OCI-LY7 (cell line): ENCODE measurements at regions of chr15 and their contacts with region 1.

Region 1: DNA sequence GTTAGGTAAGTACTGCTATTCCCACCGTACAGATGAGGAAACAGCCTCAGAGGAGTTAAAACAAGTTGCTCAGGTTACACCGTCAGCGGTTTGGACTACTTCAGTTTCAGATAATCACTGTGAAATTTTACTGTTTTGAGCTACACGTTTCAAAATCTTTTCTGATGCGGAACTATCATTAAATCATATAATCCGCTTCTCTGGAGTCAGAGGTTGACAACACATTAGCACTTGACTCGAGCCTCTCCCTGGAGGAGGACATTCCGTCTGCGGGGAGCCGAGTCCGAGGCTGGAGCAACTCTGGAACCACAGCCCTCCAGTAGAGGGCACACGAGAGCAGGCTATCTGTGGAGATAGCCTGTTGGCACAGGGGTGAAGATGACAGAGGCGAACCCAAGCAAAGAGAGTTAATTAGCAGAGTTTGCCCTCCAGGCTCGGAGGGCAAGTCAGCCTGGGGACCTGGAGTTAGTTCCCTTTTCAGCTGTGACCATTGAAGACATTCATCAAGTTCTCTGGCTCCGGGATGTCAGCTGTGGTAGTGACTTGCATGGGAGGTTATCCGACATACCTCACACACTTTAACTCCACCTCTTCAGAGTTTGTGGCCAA is 131.2 kb downstream of the IGF1R start:
- DNase-seq: peak; percentile 55
- H3K4me3 ChIP-seq: no peak overlapping the region
- H3K27ac ChIP-seq: no peak overlapping the region
- H3K4me1 ChIP-seq: no peaks in the 10 kb centered on the region
- CTCF ChIP-seq: peak; percentile 95

Region 2: DNA sequence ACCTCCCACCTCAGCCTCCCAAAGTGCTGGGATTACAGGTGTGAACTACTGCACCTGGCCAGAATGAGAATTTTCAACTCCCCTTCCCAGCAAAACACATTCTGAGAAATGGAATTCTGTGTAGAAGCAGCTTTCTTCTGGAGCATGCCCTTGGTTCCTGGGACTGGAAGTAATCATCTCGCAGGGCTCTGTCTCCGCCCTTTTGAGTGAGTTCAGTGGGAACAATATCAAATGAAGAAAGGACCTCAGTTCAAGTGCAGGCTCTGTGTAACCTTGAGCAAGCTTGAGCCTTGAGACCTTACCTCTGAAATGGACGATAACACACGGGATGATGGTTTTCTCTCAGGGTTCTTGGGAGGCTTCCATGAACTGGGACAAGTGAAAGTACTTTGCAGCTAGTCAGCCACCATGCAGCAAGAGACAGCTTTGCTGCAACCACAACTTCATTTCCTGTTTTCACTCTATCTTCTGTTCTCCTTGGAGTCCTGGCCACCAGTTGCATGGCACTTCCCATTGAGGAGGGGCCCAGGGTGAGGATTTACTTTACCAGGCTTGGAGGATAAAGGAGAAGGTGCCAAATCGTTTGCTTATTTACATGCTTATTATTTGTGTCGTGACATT is 167.0 kb before region 1 on chr15:
- CTCF ChIA-PET with region 1: no interaction called
- POLR2A ChIA-PET with region 1: no interaction called
- intact Hi-C with region 1: no loop called
- DNase-seq: no peak
- H3K4me3 ChIP-seq: no peak overlapping the region
- H3K27ac ChIP-seq: no peak overlapping the region
- H3K4me1 ChIP-seq: no peaks in the 10 kb centered on the region
- CTCF ChIP-seq: no peak

Region 3: GRCh38 chr15:98881526-98882520 is 102.3 kb after region 1 on chr15:
- CTCF ChIA-PET with region 1: interaction called, 4 read pairs
- POLR2A ChIA-PET with region 1: no interaction called
- intact Hi-C with region 1: loop called (anchors 1 kb)
- DNase-seq: peak; percentile 53
- H3K4me3 ChIP-seq: no peak overlapping the region
- H3K27ac ChIP-seq: no peak overlapping the region
- H3K4me1 ChIP-seq: peaks cover 9% of the 10 kb centered on the region
- CTCF ChIP-seq: peak; percentile 83